ENCODE measurements at regions of chr3 and their contacts with region 1.

Region 1: DNA sequence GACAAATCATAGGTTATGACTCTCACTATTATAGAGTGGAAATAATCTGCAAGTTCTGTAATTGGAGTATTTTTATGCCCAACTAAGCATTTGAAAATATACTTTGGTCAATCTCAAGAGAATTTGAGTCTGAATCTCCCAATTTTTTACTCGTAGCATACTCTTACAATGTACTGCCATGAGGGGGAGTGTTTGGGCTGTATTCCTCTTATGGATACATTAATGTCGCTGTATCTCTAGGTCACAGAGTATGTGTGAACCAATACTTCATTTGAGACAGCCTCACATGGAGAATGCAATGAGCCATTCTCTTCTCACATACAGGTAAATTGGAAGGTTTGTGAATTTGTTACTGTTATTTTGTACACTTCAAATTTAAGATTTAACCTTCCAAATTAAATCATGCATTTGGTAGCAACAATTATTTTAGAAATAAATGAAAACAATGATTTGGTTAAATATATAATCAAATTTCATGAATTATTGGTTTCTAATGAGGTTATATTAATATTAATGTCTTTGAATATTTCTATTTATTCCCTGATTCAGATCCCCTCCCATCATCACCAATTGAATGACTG is 5.5 kb upstream of the CD200 start:
- DNase-seq: no peak
- ATAC-seq: peak; percentile 98
- H3K4me3 ChIP-seq: no peak overlapping the region
- H3K27ac ChIP-seq: no peak overlapping the region
- H3K4me1 ChIP-seq: peaks cover under 1% of the 10 kb centered on the region
- H3K27me3 ChIP-seq: no peaks in the 10 kb centered on the region
- CTCF ChIP-seq: peak; percentile 71

Region 2: DNA sequence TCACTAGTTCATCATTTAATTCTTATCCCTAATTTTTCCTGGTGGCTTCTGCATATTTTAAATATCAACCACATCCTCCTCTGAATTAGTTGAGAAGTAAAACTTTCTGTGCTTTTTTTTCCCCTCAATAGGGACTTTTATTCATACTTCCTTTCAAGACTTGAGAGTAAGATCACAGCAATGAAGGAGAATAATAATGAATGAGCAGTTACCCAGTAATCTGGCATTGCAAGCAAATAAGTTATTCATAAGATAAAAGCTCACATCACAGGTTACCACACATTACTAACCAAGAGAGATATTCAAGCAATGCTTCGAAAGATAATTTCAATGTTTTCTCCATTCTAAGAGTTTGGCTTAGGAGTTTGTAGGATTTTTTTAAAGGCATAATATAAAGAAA is 121.5 kb after region 1 on chr3:
- intact Hi-C with region 1: no loop called
- DNase-seq: no peak
- ATAC-seq: no peak
- H3K4me3 ChIP-seq: no peak overlapping the region
- H3K27ac ChIP-seq: no peak overlapping the region
- H3K4me1 ChIP-seq: no peaks in the 10 kb centered on the region
- H3K27me3 ChIP-seq: no peaks in the 10 kb centered on the region
- CTCF ChIP-seq: no peak

Region 3: GRCh38 chr3:112519424-112520001 is 192.1 kb after region 1 on chr3:
- intact Hi-C with region 1: loop called (anchors 5 kb)
- DNase-seq: no peak
- ATAC-seq: peak; percentile 90
- H3K4me3 ChIP-seq: no peak overlapping the region
- H3K27ac ChIP-seq: no peak overlapping the region
- H3K4me1 ChIP-seq: no peaks in the 10 kb centered on the region
- H3K27me3 ChIP-seq: no peaks in the 10 kb centered on the region
- CTCF ChIP-seq: peak; percentile 76

Region 4: DNA sequence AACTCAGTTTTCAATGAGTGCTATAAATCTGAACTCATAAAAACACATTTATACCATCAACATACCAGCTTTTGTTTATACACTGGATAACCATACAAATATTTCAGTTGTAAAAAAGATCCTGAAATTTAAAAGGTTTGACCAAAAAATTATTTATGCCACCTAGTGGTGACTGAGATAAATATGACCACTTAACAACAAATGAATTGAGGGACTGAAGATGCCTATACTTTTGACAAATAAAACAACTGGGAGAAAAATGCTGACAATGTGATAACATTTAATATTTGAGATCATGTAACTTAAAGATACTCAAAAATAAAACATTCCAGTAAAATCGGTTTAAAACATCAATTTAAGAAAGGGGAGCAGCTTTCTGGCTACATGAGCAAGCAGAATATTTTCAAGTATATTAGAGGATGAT is 203.9 kb after region 1 on chr3:
- intact Hi-C with region 1: no loop called
- DNase-seq: no peak
- ATAC-seq: no peak
- H3K4me3 ChIP-seq: no peak overlapping the region
- H3K27ac ChIP-seq: no peak overlapping the region
- H3K4me1 ChIP-seq: no peaks in the 10 kb centered on the region
- H3K27me3 ChIP-seq: no peaks in the 10 kb centered on the region
- CTCF ChIP-seq: peak; percentile 61